ENCODE measurements at regions of chr3 and their contacts with region 1.

Region 1: DNA sequence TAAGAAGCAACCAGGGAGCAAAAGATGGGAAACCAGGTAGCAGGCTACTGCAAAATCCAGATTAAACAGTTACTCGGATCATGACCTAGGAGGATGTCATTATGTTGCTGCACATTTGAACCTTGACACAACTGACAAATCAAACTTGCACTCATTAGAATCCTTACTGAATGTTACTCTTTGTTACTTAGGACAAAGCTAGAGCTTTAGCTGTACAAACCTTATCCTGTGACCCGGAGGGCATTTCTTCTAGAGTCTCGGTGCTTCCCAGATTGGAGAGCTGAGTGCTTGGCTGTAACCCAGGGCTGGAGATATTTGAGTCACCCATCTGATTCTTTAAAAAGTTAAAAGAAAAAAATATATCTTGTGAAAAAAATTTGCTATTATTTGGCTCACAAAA is 43.4 kb downstream of the DCP1A start:
- DNase-seq: no peak
- ATAC-seq: peak; percentile 17

Region 2: GRCh38 chr3:53347261-53348064 is 43.5 kb after region 1 on chr3 and contains the start of gene DCP1A:
- intact Hi-C with region 1: loop called (anchors 5 kb)
- DNase-seq: peak; percentile 96
- ATAC-seq: peak; percentile 99
- total RNA-seq, gene DCP1A: 17.7 TPM